GM12878 (cell line): ENCODE measurements at regions of chr6 and their contacts with region 1.

Region 1: DNA sequence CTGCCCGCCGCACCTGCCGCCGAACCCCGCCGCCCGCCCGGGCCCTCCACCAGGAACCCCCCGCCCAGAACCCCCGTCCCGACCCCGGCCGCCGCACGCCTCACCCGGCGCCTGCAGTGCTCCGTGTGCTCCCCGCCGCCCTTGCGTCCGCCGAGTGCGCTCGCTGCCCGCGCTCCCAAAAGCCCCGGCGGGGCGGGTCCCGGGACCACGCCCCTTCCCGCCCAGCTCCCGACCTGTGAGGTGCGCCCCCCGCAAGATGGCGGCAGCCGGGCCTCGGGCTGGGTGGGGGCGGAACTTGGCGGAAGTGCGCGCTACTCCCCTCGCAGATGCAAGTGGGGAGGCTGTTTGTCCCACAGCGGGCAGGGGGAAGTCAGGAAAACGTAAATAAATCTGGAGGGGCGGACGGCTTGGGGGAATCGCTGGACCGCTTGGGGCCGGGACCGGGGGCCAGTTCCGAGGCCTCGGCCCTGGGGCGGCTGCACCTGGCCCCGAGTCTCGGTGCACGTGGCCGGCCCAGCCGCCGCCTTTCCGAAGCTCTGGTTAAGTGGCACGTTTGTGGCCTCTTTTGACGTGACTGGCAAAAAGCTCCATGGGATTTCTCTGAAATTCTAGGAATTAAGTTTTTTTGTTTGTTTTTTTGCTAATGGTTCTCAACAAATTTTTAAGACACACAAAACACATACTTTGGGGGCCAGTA is at the start of gene EZR:
- DNase-seq: no peak
- ATAC-seq: peak; percentile 66
- H3K4me3 ChIP-seq: peak within 1 kb of the TSS; percentile 82
- H3K27ac ChIP-seq: peak within 1 kb of the TSS; percentile 66
- H3K4me1 ChIP-seq: peaks cover 14% of the 10 kb centered on the region
- H3K27me3 ChIP-seq: no peaks in the 10 kb centered on the region
- CTCF ChIP-seq: no peak; a peak in 1 of 6 replicates
- EP300 ChIP-seq: no peak
- POLR2A ChIP-seq: peak; percentile 93
- RAD21 ChIP-seq: 0 out of 2 replicates have a peak, but pooled peaks have one; percentile 8
- polyA plus RNA-seq, gene EZR: 79.1 to 98.6 TPM

Region 2: GRCh38 chr6:158644231-158645063 is 174.9 kb before region 1 on chr6 and contains the start of gene DYNLT1:
- CTCF ChIA-PET with region 1: interaction called, 4 read pairs
- POLR2A ChIA-PET with region 1: no interaction called
- RAD21 ChIA-PET with region 1: no interaction called
- SMC1A ChIA-PET with region 1: no interaction called
- in situ Hi-C with region 1: no loop called
- intact Hi-C with region 1: loop called (anchors 5 kb)
- DNase-seq: peak; percentile 71
- ATAC-seq: peak; percentile 71
- H3K4me3 ChIP-seq: peak within 1 kb of the TSS; percentile 81
- H3K27ac ChIP-seq: peak within 1 kb of the TSS; percentile 82
- H3K4me1 ChIP-seq: peaks cover 26% of the 10 kb centered on the region
- H3K27me3 ChIP-seq: no peaks in the 10 kb centered on the region
- CTCF ChIP-seq: no peak
- EP300 ChIP-seq: no peak
- POLR2A ChIP-seq: peak; percentile 97
- RAD21 ChIP-seq: no peak
- polyA plus RNA-seq, gene DYNLT1: 246 to 298 TPM

Region 3: DNA sequence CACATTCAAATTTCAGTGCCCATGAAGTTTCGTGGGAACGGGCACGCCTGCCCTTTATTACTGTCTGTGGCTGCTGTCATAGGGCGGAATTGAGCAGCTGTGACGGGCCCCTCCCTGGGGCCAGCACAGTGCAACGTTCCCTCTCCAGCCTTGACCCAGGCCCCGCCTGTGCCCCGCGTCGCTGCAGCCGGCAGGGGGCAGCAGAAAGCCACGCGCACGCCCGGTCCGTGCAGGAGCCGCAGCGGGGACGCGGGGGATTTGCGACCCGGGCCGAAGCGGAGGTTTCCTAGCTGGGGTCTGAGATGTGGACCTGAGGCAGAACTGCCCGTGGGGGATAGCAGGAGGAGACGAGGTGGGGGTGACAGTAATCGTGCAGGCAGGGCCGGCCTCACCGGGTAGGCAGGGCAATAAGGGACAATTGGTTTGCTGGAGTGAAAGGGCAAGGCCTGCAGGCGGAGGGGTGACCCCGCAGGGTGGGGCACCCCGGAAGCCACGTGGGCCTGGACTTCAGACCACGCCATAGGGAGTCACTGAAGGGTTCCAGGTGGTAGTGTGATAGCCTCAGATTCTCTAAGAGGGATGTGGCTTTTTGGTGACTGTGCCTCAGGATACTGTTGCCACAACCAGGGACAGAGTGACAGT is 115.1 kb before region 1 on chr6:
- CTCF ChIA-PET with region 1: interaction called, 3 read pairs
- POLR2A ChIA-PET with region 1: no interaction called
- RAD21 ChIA-PET with region 1: interaction called, 4 read pairs
- SMC1A ChIA-PET with region 1: no interaction called
- in situ Hi-C with region 1: no loop called
- intact Hi-C with region 1: loop called (anchors 5 kb)
- DNase-seq: no peak
- ATAC-seq: peak; percentile 99
- H3K4me3 ChIP-seq: peak overlapping the region; percentile 45; the same call in 1 of the 2 replicates
- H3K27ac ChIP-seq: no peak overlapping the region
- H3K4me1 ChIP-seq: peaks cover 9% of the 10 kb centered on the region
- H3K27me3 ChIP-seq: no peaks in the 10 kb centered on the region
- CTCF ChIP-seq: peak; percentile 97 to 99 (median 98); a peak in 5 of 6 replicates
- EP300 ChIP-seq: no peak
- POLR2A ChIP-seq: no peak
- RAD21 ChIP-seq: peak; percentile 97

Region 4: GRCh38 chr6:158808941-158809678 is 10.3 kb before region 1 on chr6:
- CTCF ChIA-PET with region 1: interaction called, 5 read pairs
- POLR2A ChIA-PET with region 1: interaction called, 8 read pairs
- RAD21 ChIA-PET with region 1: interaction called, 10 read pairs
- SMC1A ChIA-PET with region 1: interaction called, 26 read pairs
- in situ Hi-C with region 1: no loop called
- intact Hi-C with region 1: no loop called
- DNase-seq: peak; percentile 80
- ATAC-seq: peak; percentile 69
- H3K4me3 ChIP-seq: peak overlapping the region; percentile 29; the same call in 1 of the 2 replicates
- H3K27ac ChIP-seq: peak overlapping the region; percentile 54
- H3K4me1 ChIP-seq: peaks cover 76% of the 10 kb centered on the region
- H3K27me3 ChIP-seq: no peaks in the 10 kb centered on the region
- CTCF ChIP-seq: no peak
- EP300 ChIP-seq: peak; percentile 75 to 91
- POLR2A ChIP-seq: no peak
- RAD21 ChIP-seq: no peak

Region 5: GRCh38 chr6:158910484-158911348 is 91.4 kb after region 1 on chr6:
- CTCF ChIA-PET with region 1: no interaction called
- POLR2A ChIA-PET with region 1: interaction called, 6 read pairs
- RAD21 ChIA-PET with region 1: interaction called, 3 read pairs
- SMC1A ChIA-PET with region 1: interaction called, 19 read pairs
- in situ Hi-C with region 1: no loop called
- intact Hi-C with region 1: loop called (anchors 2 kb)
- DNase-seq: peak; percentile 54
- ATAC-seq: peak; percentile 90
- H3K4me3 ChIP-seq: peak overlapping the region; percentile 56
- H3K27ac ChIP-seq: peak overlapping the region; percentile 99
- H3K4me1 ChIP-seq: peaks cover 33% of the 10 kb centered on the region
- H3K27me3 ChIP-seq: no peaks in the 10 kb centered on the region
- CTCF ChIP-seq: no peak
- EP300 ChIP-seq: peak; percentile 36 to 78; a peak in 3 of 4 replicates
- POLR2A ChIP-seq: peak; percentile 51; the same call in 1 of the 2 replicates
- RAD21 ChIP-seq: peak; percentile 35; the same call in 1 of the 2 replicates